Activated naive CD4-positive, alpha-beta T cell treated with anti-CD3 and anti-CD28 coated beads, Interleukin-2, amount 10 ng/mL, durations not matched to agents 7 days and 5 days (primary cell): ENCODE measurements at regions of chr3 and their contacts with region 1.

Region 1: GRCh38 chr3:30693470-30694120 is 87.2 kb downstream of the TGFBR2 start:
- DNase-seq: peak; percentile 55
- H3K4me3 Mint-ChIP-seq: no peak overlapping the region
- H3K27ac Mint-ChIP-seq: peak overlapping the region; percentile 73
- H3K4me1 Mint-ChIP-seq: peaks cover 55% of the 10 kb centered on the region
- H3K27me3 Mint-ChIP-seq: no peaks in the 10 kb centered on the region

Region 2: DNA sequence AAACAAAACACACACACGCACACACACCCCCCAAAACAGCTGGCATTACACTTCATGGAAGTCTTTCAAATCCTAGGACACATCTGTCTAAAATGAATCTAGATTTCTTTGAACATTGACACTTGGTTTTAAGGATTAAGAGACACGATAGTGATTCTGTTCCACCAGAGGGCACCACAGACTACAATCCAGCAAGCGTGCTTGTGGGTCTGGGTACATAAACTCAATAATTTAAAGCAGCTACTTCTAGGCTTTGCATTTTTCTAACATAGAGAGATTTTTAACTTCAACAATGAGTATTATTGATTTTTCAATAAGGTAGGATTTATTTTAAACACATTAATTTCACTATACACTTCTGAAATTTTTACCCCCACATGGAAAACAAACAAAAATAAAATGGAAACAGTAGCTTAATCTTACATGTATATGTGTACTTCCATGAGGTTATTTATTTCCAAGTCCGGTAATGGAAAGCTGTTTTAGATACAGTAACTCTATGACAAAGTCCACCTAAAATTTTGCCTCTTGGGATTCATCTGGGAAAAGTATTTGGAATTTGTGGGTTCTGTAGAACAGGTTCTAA is 651.2 kb before region 1 on chr3:
- CTCF ChIA-PET with region 1: interaction called, 19 read pairs
- DNase-seq: peak; percentile 76
- H3K4me3 Mint-ChIP-seq: no peak overlapping the region
- H3K27ac Mint-ChIP-seq: no peak overlapping the region
- H3K4me1 Mint-ChIP-seq: peaks cover 4% of the 10 kb centered on the region
- H3K27me3 Mint-ChIP-seq: peaks cover 18% of the 10 kb centered on the region

Region 3: GRCh38 chr3:30112902-30113484 is 580.6 kb before region 1 on chr3:
- CTCF ChIA-PET with region 1: interaction called, 21 read pairs
- DNase-seq: no peak
- H3K4me3 Mint-ChIP-seq: no peak overlapping the region
- H3K27ac Mint-ChIP-seq: no peak overlapping the region
- H3K4me1 Mint-ChIP-seq: peaks cover 7% of the 10 kb centered on the region
- H3K27me3 Mint-ChIP-seq: peaks cover 5% of the 10 kb centered on the region

Region 4: DNA sequence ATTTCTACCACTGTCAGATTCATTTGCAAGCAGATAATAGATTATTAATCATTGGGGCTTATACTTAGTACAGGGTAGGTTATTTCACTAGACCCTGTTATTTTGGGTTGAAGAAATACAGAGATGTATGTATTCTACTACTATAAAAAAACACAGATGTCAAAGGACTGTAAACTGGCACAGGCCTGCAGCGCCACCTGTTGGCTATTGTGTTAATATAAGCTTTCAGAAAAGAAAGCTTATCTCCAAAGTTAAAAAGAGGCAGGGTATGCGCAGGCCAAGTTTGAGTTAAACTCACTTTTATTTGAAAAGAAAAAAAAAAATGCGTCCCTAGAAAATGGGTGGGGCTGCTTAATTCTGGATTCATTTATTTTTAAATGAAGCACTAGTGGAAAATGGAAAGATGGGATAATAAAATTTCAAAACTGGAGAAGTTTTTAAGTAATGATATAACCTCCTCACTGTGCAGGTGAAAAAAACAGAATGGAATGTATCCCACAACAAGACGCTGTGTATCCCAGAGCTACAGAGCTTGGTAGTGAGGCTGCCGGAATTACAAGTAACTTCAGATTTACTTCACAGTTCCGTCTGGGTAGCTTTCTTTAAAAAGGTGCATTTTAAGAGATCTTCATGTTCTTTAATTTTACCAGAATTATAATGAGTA is 494.4 kb before region 1 on chr3:
- CTCF ChIA-PET with region 1: interaction called, 30 read pairs
- DNase-seq: peak; percentile 80
- H3K4me3 Mint-ChIP-seq: no peak overlapping the region
- H3K27ac Mint-ChIP-seq: no peak overlapping the region
- H3K4me1 Mint-ChIP-seq: peaks cover 2% of the 10 kb centered on the region
- H3K27me3 Mint-ChIP-seq: no peaks in the 10 kb centered on the region

Region 5: DNA sequence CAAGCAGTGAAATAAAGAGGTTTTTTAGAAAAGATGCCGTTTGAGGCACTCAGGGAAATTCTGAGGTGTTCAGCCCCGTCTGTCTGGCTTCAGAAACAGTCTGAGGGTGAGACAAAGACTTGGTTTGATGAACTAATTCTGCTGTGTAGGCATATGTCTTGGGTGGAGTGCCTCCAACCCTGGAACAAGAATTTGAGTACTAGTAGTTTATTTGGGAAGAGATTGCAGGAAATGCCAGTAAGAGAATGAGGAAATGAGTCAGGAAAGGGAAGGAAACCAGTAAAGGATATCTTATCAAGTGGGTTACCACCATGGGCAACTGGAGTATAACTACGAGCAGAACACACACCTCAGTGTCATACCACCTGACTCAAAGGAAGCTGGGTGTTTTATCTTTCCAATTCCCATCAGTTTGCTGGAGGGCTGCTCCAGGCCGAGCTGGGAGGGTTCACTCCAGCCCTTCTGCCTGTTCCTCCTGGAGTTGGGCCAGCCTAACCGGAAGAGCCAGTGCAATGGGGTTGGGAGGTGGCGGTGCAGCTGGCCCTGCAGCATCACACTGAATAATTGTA is 11.9 kb before region 1 on chr3:
- CTCF ChIA-PET with region 1: interaction called, 10 read pairs
- DNase-seq: peak; percentile 27
- H3K4me3 Mint-ChIP-seq: peak overlapping the region; percentile 4
- H3K27ac Mint-ChIP-seq: peak overlapping the region; percentile 86
- H3K4me1 Mint-ChIP-seq: peaks cover 94% of the 10 kb centered on the region
- H3K27me3 Mint-ChIP-seq: no peaks in the 10 kb centered on the region

Region 6: GRCh38 chr3:30704931-30705890 is 11.6 kb after region 1 on chr3:
- CTCF ChIA-PET with region 1: interaction called, 13 read pairs
- DNase-seq: no peak
- H3K4me3 Mint-ChIP-seq: no peak overlapping the region
- H3K27ac Mint-ChIP-seq: peak overlapping the region; percentile 66
- H3K4me1 Mint-ChIP-seq: peaks cover 9% of the 10 kb centered on the region
- H3K27me3 Mint-ChIP-seq: no peaks in the 10 kb centered on the region